Mammary epithelial cell (primary cell): ENCODE measurements at regions of chr19 and their contacts with region 1.

Region 1: GRCh38 chr19:15702534-15702930 is 25.3 kb upstream of the OR10H2 start:
- DNase-seq: peak; percentile 60
- H3K4me3 ChIP-seq: no peak overlapping the region
- H3K27ac ChIP-seq: no peak overlapping the region
- H3K4me1 ChIP-seq: no peaks in the 10 kb centered on the region
- H3K27me3 ChIP-seq: no peaks in the 10 kb centered on the region
- CTCF ChIP-seq: no peak

Region 2: DNA sequence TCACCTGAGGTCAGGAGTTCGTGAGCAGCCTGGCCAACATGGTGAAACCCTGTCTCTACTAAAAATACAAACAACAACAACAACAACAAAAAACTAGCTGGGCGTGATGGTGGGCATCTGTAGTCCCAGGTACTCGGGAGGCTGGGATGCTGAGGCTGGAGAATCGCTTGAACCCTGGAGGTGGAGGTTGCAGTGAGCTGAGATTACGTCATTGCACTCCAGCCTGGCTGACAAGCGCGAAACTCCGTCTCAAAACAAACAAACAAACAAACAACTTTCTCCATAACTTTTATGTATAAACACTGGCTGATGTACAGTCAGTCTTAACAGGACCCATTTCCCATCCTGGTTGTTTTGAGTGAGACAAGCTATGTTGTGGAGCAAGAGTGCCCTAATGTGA is 93.3 kb before region 1 on chr19:
- CTCF ChIA-PET with region 1: no interaction called
- dilution Hi-C with region 1: loop called (anchors 5 kb)
- in situ Hi-C with region 1: no loop called
- intact Hi-C with region 1: no loop called
- DNase-seq: no peak
- H3K4me3 ChIP-seq: no peak overlapping the region
- H3K27ac ChIP-seq: no peak overlapping the region
- H3K4me1 ChIP-seq: no peaks in the 10 kb centered on the region
- H3K27me3 ChIP-seq: peaks cover 2% of the 10 kb centered on the region
- CTCF ChIP-seq: no peak

Region 3: DNA sequence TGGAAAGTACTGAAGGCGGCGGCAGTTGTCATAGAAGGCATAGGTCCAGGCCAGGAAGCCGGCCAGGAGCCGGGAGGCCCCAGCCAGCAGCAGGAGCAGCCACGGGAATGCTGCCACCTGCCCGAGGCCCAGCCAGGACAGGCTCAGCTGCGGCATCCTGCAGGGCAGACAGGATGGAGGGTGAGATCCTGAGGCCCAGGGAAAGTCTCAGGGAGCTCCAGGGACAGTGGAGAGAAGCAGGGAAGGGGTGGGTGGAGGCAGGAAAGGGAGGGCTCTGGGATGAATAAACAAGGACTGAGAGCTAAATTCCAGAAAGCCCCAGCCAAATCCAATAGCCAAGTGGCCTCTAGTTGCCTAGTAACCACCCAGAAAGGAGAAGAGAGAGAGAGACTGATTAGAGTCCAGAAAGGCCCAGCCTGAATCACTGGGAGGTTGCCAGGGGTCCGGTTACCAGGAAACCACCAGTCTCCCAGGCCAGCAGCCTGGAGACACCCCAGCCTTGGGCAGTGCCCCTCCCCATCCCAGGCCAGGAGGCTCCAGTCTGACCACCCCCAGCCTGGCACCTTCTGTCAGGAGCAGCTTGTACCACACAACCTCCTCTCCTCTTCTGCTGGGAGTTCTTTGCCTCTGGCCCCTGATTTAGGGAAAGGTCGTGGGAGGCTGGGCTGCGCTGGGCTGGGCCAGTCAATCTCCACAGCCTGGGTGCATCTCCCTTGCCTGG is 77.4 kb after region 1 on chr19:
- CTCF ChIA-PET with region 1: no interaction called
- dilution Hi-C with region 1: loop called (anchors 5 kb)
- in situ Hi-C with region 1: no loop called
- intact Hi-C with region 1: no loop called
- DNase-seq: peak; percentile 11
- H3K4me3 ChIP-seq: no peak overlapping the region
- H3K27ac ChIP-seq: no peak overlapping the region
- H3K4me1 ChIP-seq: no peaks in the 10 kb centered on the region
- H3K27me3 ChIP-seq: no peaks in the 10 kb centered on the region
- CTCF ChIP-seq: no peak

Region 4: GRCh38 chr19:15905026-15905425 is 202.5 kb after region 1 on chr19:
- CTCF ChIA-PET with region 1: no interaction called
- dilution Hi-C with region 1: no loop called
- in situ Hi-C with region 1: loop called in 1 of 2 experiments (anchors 5 kb)
- intact Hi-C with region 1: no loop called
- DNase-seq: no peak
- H3K4me3 ChIP-seq: no peak overlapping the region
- H3K27ac ChIP-seq: no peak overlapping the region
- H3K4me1 ChIP-seq: no peaks in the 10 kb centered on the region
- H3K27me3 ChIP-seq: no peaks in the 10 kb centered on the region
- CTCF ChIP-seq: no peak